Transverse colon (tissue), 4 donors: ENCODE measurements at regions of chr15 and their contacts with region 1.

Region 1: DNA sequence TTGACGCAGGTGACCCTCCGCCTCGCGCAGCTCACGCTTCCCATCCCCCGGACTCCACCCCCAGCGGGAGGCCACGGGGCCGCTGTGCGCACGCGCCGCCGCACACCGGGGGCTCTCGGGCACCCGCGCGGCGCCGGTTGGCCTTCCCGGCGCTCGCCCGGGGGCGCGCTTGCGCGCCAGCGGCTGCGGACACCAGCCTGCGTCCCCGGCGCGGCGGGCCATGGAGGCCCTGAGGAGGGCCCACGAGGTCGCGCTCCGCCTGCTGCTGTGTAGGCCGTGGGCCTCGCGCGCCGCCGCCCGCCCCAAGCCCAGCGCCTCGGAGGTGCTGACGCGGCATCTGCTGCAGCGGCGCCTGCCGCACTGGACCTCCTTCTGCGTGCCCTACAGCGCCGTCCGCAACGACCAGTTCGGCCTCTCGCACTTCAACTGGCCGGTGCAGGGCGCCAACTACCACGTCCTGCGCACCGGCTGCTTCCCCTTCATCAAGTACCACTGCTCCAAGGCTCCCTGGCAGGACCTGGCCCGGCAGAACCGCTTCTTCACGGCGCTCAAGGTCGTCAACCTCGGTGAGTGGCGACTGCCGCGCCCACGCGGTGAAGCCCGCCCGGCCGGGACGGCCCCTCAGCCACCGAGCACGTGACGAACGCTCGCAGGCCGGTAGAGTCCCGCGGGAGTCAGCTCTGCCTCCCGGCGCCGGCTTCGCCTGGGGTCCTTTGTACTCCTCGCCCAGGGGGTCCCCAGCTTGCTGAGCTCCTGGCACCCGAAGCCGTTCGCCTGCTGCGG is at the start of gene C15orf61:
- DNase-seq: peak; percentile 93
- H3K4me3 ChIP-seq: peak within 1 kb of the TSS; percentile 69 to 97 (median 74)
- H3K27ac ChIP-seq: peak within 1 kb of the TSS; percentile 96 to 100 (median 96)
- H3K4me1 ChIP-seq: peaks cover 8 to 26% (median 23%) of the 10 kb centered on the region in 4 donors
- H3K27me3 ChIP-seq: no peaks in the 10 kb centered on the region
- CTCF ChIP-seq: peak in 1 of 5 experiments; percentile 3
- EP300 ChIP-seq: no peak
- POLR2A ChIP-seq: peak; percentile 74
- total RNA-seq, gene C15orf61: 4.0 to 22.4 (median 9.8) TPM

Region 2: GRCh38 chr15:67542420-67543347 is 21.5 kb after region 1 on chr15 and contains the start of gene MAP2K5:
- in situ Hi-C with region 1: no loop called
- intact Hi-C with region 1: loop called (anchors 2 kb)
- DNase-seq: peak; percentile 90
- H3K4me3 ChIP-seq: peak within 1 kb of the TSS; percentile 61 to 96 (median 72)
- H3K27ac ChIP-seq: peak within 1 kb of the TSS; percentile 90 to 94 (median 92)
- H3K4me1 ChIP-seq: peaks cover 6 to 36% (median 22%) of the 10 kb centered on the region in 4 donors
- H3K27me3 ChIP-seq: no peaks in the 10 kb centered on the region
- CTCF ChIP-seq: no peak
- EP300 ChIP-seq: no peak
- POLR2A ChIP-seq: peak; percentile 77
- total RNA-seq, gene MAP2K5: 19.8 to 320 (median 21.1) TPM